Activated naive CD8-positive, alpha-beta T cell treated with anti-CD3 and anti-CD28 coated beads, Interleukin-2, amount 10 ng/mL, durations not matched to agents 7 days and 5 days (primary cell): ENCODE measurements at regions of chr7 and their contacts with region 1.

Region 1: DNA sequence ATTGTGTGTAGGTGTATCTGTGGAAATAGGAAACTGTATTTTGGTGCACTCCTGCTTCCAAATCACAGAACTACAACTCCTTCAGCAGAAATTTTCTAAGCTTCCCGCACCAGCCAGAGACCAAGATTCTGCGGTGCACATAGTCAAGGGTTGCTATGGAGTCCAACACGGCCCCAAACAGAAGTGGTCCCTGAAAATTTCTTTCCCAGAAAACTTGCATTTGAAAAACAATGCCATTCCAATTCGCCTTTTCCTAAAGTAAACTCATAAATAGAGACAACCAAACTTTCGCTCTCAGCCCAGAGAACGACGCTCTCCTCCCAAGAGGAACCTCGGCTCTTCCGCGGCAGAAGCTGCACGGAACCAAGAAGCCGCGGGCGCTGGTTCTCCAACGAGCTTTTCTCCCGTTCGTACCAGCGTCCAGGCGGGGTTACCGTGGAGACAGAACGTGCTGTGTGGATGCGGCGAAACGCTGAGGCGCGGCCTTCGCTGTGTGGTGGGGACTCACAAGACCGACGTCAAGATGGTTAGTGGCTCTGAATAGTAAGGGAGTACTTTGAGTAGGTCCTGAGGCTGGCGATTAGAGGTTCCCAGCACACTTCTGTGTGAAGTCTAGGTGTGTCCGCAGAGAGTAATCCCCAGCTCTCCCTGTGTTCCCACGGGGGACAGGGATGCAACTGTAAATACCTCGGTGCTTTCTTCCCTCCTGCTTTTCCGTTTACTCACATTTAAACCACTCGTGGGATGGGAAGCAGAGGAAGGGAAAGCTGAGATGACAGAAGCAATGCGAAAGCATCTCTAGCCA is 24.0 kb upstream of the ZC3HAV1 start:
- DNase-seq: peak; percentile 87
- ATAC-seq: peak; percentile 96
- H3K4me3 Mint-ChIP-seq: peak overlapping the region; percentile 90
- H3K27ac Mint-ChIP-seq: peak overlapping the region; percentile 81
- H3K4me1 Mint-ChIP-seq: peaks cover 18% of the 10 kb centered on the region
- H3K27me3 Mint-ChIP-seq: peaks cover 4% of the 10 kb centered on the region

Region 2: GRCh38 chr7:139118234-139118804 is 15.2 kb before region 1 on chr7:
- POLR2A ChIA-PET with region 1: interaction called, 18 read pairs
- DNase-seq: no peak
- ATAC-seq: no peak
- H3K4me3 Mint-ChIP-seq: no peak overlapping the region
- H3K27ac Mint-ChIP-seq: peak overlapping the region; percentile 89
- H3K4me1 Mint-ChIP-seq: peaks cover 19% of the 10 kb centered on the region
- H3K27me3 Mint-ChIP-seq: no peaks in the 10 kb centered on the region